ENCODE measurements at regions of chr2 and their contacts with region 1.

Region 1: GRCh38 chr2:37890893-37891495 is 34.1 kb upstream of the RMDN2 start:
- DNase-seq: peak; percentile 40
- H3K4me3 ChIP-seq: no peak overlapping the region
- H3K27ac ChIP-seq: no peak overlapping the region
- H3K4me1 ChIP-seq: peaks cover 16% of the 10 kb centered on the region
- H3K27me3 ChIP-seq: no peaks in the 10 kb centered on the region
- CTCF ChIP-seq: peak; percentile 67 to 82

Region 2: DNA sequence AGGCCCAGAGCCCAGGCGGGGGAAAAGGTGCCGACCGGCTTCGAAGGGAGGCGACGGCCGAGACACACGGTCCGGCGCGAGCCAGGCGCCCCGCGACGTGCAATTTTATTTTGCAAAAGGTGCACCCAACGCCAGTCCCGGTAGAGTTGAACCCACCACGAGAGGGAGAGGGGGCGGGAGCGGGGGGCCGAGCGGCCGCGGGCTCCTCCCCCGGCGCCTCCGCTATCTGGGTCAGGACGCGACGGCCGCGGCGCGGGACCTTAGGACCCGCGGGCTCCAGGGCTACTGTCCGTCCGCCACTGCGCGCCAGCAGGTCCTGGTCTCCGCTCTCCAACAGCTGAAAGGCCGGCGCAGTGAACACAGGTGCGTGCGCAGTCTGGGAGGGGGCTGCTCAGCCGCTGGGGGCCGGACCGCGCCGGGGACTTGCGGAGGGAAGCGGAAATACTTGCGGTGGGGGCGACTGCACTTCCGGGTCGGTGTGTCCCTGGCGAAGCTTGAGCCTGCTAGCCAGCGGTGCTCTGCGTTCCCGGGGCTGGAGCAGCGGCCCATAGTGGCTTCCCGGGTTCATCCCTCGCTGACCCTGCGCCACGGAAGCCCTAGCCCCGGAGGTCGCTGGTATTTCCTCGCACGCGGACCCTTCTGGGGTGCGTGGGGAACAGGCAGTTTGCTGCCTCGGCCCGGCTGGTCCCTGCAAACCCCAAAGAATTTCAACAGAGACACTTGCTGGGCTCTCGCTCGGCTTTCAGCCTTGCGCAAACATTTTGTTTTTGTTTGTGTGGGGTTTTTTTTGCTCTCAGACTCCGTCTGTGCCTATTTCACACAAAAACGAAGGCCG is 34.3 kb after region 1 on chr2 and contains the start of gene RMDN2:
- CTCF ChIA-PET with region 1: no interaction called
- dilution Hi-C with region 1: no loop called
- in situ Hi-C with region 1: no loop called
- intact Hi-C with region 1: loop called (anchors 1 kb)
- DNase-seq: peak; percentile 87
- H3K4me3 ChIP-seq: peak within 1 kb of the TSS; percentile 67 to 79 (median 78)
- H3K27ac ChIP-seq: peak within 1 kb of the TSS; percentile 68
- H3K4me1 ChIP-seq: no peaks in the 10 kb centered on the region
- H3K27me3 ChIP-seq: no peaks in the 10 kb centered on the region
- CTCF ChIP-seq: peak in 1 of 2 donors; percentile 6
- total RNA-seq, gene RMDN2: 5.4 to 12.5 TPM

Measured in mammary epithelial cell (primary cell).